ENCODE measurements at regions of chr6 and their contacts with region 1.

Region 1: DNA sequence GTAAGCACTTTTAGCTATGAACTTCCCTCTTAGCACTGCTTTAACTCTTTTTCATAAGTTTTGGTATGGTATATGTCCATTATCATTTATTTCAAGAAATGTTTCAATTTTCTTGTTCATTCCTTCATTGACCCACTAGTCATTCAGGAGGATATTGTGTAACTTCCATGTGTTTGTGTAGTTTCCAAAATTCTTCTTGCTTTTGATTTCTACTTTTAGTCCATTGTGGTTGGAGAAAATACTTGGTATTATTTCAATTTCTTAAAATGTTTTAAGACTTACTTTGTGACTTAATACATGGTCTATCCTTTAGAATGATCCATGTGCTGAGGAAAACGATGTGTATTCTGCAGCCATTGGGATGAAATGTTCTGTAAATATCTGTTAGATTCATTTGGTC is 176.5 kb downstream of the CENPW start:
- DNase-seq: no peak
- H3K4me3 ChIP-seq: no peak overlapping the region
- H3K27ac ChIP-seq: no peak overlapping the region
- H3K4me1 ChIP-seq: no peaks in the 10 kb centered on the region
- H3K27me3 ChIP-seq: no peaks in the 10 kb centered on the region
- CTCF ChIP-seq: no peak
- POLR2A ChIP-seq: no peak

Region 2: GRCh38 chr6:126352514-126352913 is 163.9 kb before region 1 on chr6:
- CTCF ChIA-PET with region 1: no interaction called
- POLR2A ChIA-PET with region 1: no interaction called
- dilution Hi-C with region 1: no loop called
- intact Hi-C with region 1: no loop called
- DNase-seq: no peak
- H3K4me3 ChIP-seq: no peak overlapping the region
- H3K27ac ChIP-seq: no peak overlapping the region
- H3K4me1 ChIP-seq: peaks cover 18% of the 10 kb centered on the region
- H3K27me3 ChIP-seq: no peaks in the 10 kb centered on the region
- CTCF ChIP-seq: no peak
- POLR2A ChIP-seq: no peak

Region 3: DNA sequence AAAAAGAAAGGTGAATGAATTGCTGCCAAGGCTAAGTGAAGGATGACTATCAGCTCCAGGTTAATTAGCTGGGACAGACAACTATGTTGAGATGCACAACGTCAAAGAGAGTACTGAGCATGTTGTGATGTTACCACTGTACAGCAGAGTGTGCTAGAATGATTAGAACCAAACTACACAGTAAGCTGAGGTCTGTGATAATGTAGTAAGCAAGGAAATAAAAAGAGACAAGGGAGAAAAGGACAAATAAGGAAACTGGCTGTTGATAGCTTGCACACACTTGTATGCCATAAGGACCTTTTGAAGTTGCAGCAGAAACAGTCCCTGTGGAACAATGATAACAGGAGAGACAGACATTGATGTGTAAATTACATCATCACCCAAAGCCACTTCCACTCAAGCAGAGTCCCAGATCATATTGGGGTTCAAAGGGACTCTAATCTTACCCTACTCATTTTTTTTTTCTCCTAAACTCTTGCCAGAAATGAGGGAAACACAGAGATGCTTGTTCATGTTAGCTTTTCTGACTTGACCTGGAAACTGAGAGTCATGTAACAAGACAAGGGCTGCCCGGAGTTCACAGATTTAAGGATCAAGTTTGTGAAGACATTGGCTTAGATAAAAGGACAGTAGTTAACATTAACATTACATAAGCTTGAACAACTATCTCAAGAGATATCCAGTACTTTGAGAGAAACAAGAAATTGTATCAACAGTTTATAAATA is 13.4 kb after region 1 on chr6:
- CTCF ChIA-PET with region 1: interaction called, 3 read pairs
- POLR2A ChIA-PET with region 1: interaction called, 15 read pairs
- dilution Hi-C with region 1: no loop called
- intact Hi-C with region 1: no loop called
- DNase-seq: no peak
- H3K4me3 ChIP-seq: no peak overlapping the region
- H3K27ac ChIP-seq: no peak overlapping the region
- H3K4me1 ChIP-seq: peaks cover 2% of the 10 kb centered on the region
- H3K27me3 ChIP-seq: no peaks in the 10 kb centered on the region
- CTCF ChIP-seq: no peak
- POLR2A ChIP-seq: no peak